ENCODE measurements at regions of chr2 and their contacts with region 1.

Region 1: GRCh38 chr2:130873700-130874346 is 37.1 kb downstream of the ARHGEF4 start:
- DNase-seq: peak; percentile 82
- H3K4me3 ChIP-seq: no peak overlapping the region
- H3K27ac ChIP-seq: no peak overlapping the region
- H3K4me1 ChIP-seq: no peaks in the 10 kb centered on the region
- H3K27me3 ChIP-seq: no peaks in the 10 kb centered on the region
- CTCF ChIP-seq: peak; percentile 72
- EP300 ChIP-seq: no peak
- RAD21 ChIP-seq: peak; percentile 83

Region 2: GRCh38 chr2:130759910-130760753 is 113.7 kb before region 1 on chr2:
- CTCF ChIA-PET with region 1: interaction called, 14 read pairs
- POLR2A ChIA-PET with region 1: no interaction called
- DNase-seq: peak; percentile 54
- H3K4me3 ChIP-seq: no peak overlapping the region
- H3K27ac ChIP-seq: no peak overlapping the region
- H3K4me1 ChIP-seq: peaks cover 0 to 27% of the 10 kb centered on the region in 2 experiments; a peak in 1 of 4 replicates
- H3K27me3 ChIP-seq: no peaks in the 10 kb centered on the region; the same call in 1 of the 2 replicates
- CTCF ChIP-seq: no peak
- EP300 ChIP-seq: no peak
- RAD21 ChIP-seq: no peak

Region 3: DNA sequence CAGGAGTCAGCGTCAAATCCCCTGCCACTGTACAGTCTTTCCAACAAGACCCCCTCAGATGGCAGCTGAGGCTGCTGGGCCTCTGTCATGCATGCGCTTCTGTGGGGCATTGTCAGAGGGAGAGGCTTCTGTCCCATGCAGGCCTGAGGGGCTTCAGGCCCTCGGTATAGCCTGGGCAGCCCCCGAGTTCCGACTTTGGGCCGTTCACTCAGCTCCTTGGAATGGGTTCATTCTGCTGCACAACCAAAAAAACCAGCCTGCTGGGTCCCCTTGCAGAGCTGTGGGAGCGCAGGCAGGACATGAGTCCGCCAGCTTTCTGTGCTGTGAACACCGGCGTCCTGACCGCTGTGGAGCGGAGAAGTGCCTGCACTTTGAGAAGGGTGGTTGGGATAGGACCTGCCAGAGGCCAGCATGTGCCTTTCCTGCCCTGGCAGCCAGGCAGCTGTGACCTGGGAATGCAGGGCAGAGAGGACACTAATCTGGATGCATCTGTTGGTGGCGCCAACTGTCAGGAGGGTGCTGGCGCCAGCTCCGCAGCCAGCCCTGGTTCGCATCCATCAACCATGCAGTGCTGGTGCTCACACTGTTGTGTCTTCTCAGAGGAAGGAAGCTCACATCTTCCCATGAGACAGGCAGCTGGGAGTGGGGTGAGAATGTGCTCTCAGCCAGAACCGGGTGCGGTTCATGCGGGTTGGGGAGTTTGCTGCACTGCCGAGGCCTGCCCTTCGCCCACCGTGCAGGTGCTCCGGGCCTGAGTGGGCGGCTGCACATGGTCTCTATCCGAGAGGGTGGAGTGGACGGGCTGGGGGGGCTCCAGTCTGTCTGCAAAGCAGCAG is 22.8 kb before region 1 on chr2:
- CTCF ChIA-PET with region 1: interaction called, 10 read pairs
- POLR2A ChIA-PET with region 1: no interaction called
- DNase-seq: peak; percentile 57
- H3K4me3 ChIP-seq: no peak overlapping the region
- H3K27ac ChIP-seq: no peak overlapping the region
- H3K4me1 ChIP-seq: no peaks in the 10 kb centered on the region; a peak in 1 of 4 replicates
- H3K27me3 ChIP-seq: no peaks in the 10 kb centered on the region
- CTCF ChIP-seq: no peak
- EP300 ChIP-seq: no peak
- RAD21 ChIP-seq: no peak

Region 4: GRCh38 chr2:130884503-130884902 is 10.7 kb after region 1 on chr2:
- CTCF ChIA-PET with region 1: interaction called, 38 read pairs
- POLR2A ChIA-PET with region 1: no interaction called
- DNase-seq: no peak
- H3K4me3 ChIP-seq: no peak overlapping the region
- H3K27ac ChIP-seq: no peak overlapping the region; a peak in 1 of 4 replicates
- H3K4me1 ChIP-seq: peaks cover 0 to 17% of the 10 kb centered on the region in 2 experiments; a peak in 2 of 4 replicates
- H3K27me3 ChIP-seq: no peaks in the 10 kb centered on the region; the same call in 1 of the 2 replicates
- CTCF ChIP-seq: no peak
- EP300 ChIP-seq: no peak
- RAD21 ChIP-seq: peak; percentile 42

Region 5: DNA sequence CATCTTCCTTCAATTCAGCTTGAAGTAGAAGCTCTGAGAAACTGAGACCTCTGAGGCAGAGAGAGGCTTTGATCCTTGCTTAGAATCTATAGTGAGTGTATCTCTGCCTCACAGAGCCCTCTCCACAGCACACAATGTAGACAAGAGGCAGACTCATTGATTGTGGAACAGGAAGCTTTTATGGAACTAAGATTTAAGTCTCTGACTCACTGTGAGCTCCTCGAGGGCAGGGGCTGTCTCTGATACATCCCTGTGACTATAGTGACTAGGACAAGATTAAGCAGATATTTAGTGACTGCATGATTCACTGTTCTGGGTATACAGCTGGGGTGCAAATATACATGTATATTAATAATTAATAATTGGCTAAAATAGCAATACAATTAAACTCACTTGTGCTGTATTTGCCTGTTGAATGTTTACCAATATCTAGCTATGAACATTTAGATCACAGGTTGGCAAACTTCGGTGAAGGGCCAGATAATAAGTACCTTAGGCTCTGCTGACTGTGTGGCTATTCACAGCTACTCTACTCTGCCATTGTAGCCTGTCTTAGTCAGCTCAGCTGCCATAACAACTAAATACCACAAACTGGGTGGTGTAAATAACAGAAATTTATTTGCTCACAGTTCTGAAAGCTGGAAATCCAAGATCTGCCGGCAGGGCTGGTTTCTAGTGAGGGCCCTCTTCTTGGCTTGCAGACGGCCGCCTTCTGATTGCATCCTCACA is 17.3 kb after region 1 on chr2:
- CTCF ChIA-PET with region 1: interaction called, 12 read pairs
- POLR2A ChIA-PET with region 1: no interaction called
- DNase-seq: no peak
- H3K4me3 ChIP-seq: no peak overlapping the region
- H3K27ac ChIP-seq: no peak overlapping the region
- H3K4me1 ChIP-seq: no peaks in the 10 kb centered on the region
- H3K27me3 ChIP-seq: no peaks in the 10 kb centered on the region; the same call in 1 of the 2 replicates
- CTCF ChIP-seq: no peak
- EP300 ChIP-seq: no peak
- RAD21 ChIP-seq: no peak

Measured in SK-N-SH (cell line).